A549 (cell line): ENCODE measurements at regions of chr5 and their contacts with region 1.

Region 1: DNA sequence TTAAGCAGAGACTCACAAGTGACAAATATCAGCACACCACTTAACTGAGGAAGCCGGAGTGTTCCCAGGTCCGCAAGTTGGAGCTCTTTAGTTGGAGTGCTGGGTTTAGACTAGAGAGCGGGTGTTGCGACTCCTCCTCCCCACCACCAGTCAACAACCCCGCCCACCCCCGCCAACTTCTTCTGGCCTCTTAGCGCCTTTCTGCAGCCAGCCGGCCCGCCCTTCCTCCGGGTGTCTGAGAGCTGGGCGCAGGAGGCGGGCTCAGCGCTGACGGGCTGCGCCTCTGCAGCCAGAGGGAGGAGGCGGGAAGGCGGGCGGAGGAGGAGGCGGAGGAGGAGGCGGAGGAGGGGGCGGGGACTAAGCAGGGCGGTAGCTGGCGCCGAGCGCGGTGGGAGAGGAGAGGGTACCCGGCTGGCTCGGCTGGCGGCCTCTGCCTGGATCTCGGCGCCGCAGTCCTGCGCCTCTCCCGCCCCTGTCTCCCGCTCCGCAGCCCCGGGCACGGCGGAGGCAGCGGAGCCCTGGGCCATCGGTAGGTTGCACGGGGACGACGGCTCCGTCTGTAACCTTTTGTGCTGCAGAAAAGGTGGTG is at the start of gene MACIR:
- DNase-seq: peak; percentile 86 to 98
- ATAC-seq: peak; percentile 85 to 94
- H3K4me3 ChIP-seq: peak within 1 kb of the TSS; percentile 90
- H3K27ac ChIP-seq: peak within 1 kb of the TSS; percentile 93 to 95
- H3K4me1 ChIP-seq: peaks cover 34% of the 10 kb centered on the region
- CTCF ChIP-seq: no peak
- EP300 ChIP-seq: no peak
- POLR2A ChIP-seq: peak; percentile 91
- RAD21 ChIP-seq: 0 out of 5 replicates have a peak, but pooled peaks of 1 of the 2 experiments have one; percentile 11
- polyA plus RNA-seq, gene MACIR: 35.3 and 38.8 TPM in 2 replicates

Region 2: DNA sequence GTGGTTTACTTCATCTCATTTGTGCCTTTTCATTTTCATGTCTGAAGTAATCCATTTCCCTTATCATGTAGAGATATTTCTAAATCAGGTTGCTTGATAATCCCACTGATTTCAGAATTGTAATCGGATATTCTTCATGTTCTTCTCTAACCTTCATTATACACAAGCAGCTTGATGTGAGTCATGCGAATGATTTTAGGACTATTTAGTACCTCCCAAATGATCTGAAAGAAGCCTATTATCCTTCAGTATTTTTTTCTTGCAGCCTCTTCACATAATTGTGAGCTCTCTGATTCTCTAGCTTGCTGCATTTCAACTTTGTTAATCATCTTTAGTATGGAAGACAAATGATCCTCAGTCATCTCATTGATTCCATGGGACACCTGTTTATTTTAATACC is 320.5 kb before region 1 on chr5:
- CTCF ChIA-PET with region 1: no interaction called
- POLR2A ChIA-PET with region 1: no interaction called
- DNase-seq: no peak
- ATAC-seq: no peak
- H3K4me3 ChIP-seq: no peak overlapping the region
- H3K27ac ChIP-seq: no peak overlapping the region
- H3K4me1 ChIP-seq: no peaks in the 10 kb centered on the region
- CTCF ChIP-seq: no peak
- EP300 ChIP-seq: no peak
- POLR2A ChIP-seq: no peak
- RAD21 ChIP-seq: no peak

Region 3: DNA sequence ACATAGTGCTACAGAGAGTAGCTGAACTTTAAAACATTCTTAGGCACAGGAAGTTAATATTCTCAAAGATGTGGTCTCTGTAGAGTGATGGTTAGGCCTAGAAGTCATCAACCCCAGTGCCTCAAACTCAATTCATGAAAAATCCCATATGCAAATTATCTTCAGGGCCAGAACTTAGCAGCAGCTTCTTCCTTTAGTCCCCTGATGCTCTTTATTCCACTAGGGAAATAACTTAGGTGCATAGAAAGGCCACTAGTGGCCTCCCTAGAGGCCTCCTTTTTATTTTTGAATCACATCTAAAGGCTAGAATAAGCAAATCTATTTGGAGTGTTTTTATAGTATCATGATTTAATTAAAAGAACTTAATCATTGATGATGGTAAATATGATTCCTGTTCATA is 226.9 kb before region 1 on chr5:
- CTCF ChIA-PET with region 1: no interaction called
- POLR2A ChIA-PET with region 1: no interaction called
- DNase-seq: peak in 1 of 2 experiments; percentile 24
- ATAC-seq: peak; percentile 62 to 76; a peak in 4 of 6 replicates
- H3K4me3 ChIP-seq: no peak overlapping the region
- H3K27ac ChIP-seq: no peak overlapping the region
- H3K4me1 ChIP-seq: no peaks in the 10 kb centered on the region
- CTCF ChIP-seq: peak; percentile 29; the same call in 2 of the 3 replicates
- EP300 ChIP-seq: no peak
- POLR2A ChIP-seq: no peak
- RAD21 ChIP-seq: no peak

Region 4: GRCh38 chr5:103273952-103274351 is 15.5 kb after region 1 on chr5:
- CTCF ChIA-PET with region 1: interaction called, 4 read pairs
- POLR2A ChIA-PET with region 1: interaction called, 14 read pairs
- DNase-seq: no peak
- ATAC-seq: no peak
- H3K4me3 ChIP-seq: no peak overlapping the region
- H3K27ac ChIP-seq: no peak overlapping the region
- H3K4me1 ChIP-seq: peaks cover 50% of the 10 kb centered on the region
- CTCF ChIP-seq: no peak
- EP300 ChIP-seq: no peak
- POLR2A ChIP-seq: no peak
- RAD21 ChIP-seq: no peak